IMR-90 (cell line): ENCODE measurements at regions of chr7 and their contacts with region 1.

Region 1: DNA sequence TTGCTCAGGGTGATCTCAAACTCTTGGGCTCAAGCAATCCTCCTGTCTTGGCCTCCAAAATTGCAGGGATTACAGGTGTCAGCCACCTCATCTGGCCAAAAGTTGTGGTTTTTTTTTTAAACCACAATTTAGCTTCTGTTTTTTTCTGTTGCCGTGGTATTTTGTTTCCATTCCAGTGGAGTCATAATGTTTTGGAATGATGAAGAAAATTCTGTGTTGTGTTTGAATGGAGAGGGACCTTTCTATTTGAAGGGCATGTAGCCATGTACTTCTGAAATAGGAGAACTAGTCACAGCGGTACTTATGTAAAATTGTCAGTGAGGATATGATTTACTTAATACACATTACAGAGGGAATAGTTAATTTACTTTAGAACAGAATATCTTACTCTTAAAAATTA is 201.3 kb downstream of the ARL4A start:
- DNase-seq: peak; percentile 66
- ATAC-seq: peak; percentile 19; the same call in 1 of the 2 replicates
- H3K4me3 ChIP-seq: no peak overlapping the region
- H3K27ac ChIP-seq: no peak overlapping the region
- H3K4me1 ChIP-seq: peaks cover 6% of the 10 kb centered on the region; the same call in 1 of the 2 replicates
- H3K27me3 ChIP-seq: no peaks in the 10 kb centered on the region
- CTCF ChIP-seq: no peak
- POLR2A ChIP-seq: no peak
- RAD21 ChIP-seq: no peak

Region 2: DNA sequence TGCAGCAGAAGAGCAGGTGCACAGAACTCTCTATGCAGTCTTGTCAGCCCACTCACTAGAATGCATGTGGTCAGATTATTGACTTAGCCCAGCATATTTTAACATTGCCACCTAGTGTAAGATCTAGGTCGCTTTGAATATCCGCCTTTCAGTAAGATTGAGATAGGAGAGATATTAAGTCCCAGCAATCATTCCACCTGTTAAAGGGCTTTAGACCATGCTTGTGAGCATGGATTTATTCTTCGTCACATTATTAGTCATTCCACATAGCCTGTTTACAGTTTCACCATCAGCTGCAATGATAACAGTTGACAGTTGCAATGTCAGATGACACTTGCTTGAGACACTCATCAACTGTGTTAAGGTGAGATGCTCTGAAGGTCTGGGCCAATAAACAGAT is 290.4 kb after region 1 on chr7:
- CTCF ChIA-PET with region 1: no interaction called
- POLR2A ChIA-PET with region 1: interaction called, 16 read pairs
- dilution Hi-C with region 1: no loop called
- in situ Hi-C with region 1: no loop called
- intact Hi-C with region 1: no loop called
- DNase-seq: peak; percentile 6
- ATAC-seq: no peak
- H3K4me3 ChIP-seq: no peak overlapping the region
- H3K27ac ChIP-seq: no peak overlapping the region
- H3K4me1 ChIP-seq: no peaks in the 10 kb centered on the region
- H3K27me3 ChIP-seq: no peaks in the 10 kb centered on the region; the same call in 1 of the 2 replicates
- CTCF ChIP-seq: no peak
- POLR2A ChIP-seq: no peak
- RAD21 ChIP-seq: no peak